Head of caudate nucleus (tissue), 42 donors: ENCODE measurements at regions of chr17 and their contacts with region 1.

Region 1: GRCh38 chr17:31842183-31843069 is 16.6 kb downstream of the COPRS start:
- DNase-seq: peak; percentile 53 to 90 (median 80)

Region 2: DNA sequence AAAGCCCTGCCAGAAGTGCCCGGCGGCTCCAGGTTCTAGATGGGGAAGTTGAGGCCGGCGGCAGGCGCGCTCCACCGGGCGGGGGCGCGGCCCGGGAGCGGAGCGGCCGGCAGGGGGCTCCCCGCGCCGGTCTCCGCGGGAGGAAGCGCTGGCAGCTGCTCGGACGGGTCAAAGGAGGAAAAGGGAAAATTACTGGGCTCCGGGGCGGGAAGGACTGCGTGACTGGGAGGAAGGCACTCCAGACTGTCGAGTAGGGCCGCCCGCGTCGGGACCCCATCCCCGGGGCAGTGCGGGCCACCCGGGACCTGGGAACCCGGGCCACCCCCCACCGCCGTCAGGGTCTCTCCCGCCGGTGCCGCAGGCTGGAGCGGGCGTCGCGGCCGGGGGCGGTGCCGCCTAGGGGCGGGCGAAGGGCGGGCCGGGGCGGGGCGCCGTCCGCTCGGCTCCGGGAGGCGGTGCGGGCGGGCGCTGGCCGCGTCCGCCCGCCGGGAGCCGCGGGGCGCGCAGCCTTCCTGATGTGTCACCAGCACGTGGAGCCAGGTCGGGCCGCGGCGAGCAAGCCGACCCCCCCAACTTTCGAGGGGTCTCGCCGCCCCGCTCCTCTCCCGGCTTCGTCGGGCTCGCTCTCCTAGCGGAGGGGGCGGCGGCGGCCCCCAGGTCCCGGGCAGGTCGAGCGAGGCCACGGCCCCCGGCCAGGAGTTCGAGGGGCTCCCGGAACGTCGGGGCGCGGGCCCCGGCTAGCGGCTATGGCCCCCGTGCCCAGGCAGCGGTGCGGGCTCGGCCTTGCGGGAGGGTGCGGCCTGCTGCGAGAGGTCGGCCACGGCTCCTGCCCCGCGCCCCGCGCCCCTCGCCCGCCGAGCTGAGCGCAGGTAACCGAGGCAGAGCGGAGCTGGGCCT is 283.4 kb before region 1 on chr17:
- intact Hi-C with region 1: loop called (anchors 5 kb)
- DNase-seq: peak; percentile 27 to 87 (median 66)